ENCODE measurements at regions of chr15 and their contacts with region 1.

Region 1: DNA sequence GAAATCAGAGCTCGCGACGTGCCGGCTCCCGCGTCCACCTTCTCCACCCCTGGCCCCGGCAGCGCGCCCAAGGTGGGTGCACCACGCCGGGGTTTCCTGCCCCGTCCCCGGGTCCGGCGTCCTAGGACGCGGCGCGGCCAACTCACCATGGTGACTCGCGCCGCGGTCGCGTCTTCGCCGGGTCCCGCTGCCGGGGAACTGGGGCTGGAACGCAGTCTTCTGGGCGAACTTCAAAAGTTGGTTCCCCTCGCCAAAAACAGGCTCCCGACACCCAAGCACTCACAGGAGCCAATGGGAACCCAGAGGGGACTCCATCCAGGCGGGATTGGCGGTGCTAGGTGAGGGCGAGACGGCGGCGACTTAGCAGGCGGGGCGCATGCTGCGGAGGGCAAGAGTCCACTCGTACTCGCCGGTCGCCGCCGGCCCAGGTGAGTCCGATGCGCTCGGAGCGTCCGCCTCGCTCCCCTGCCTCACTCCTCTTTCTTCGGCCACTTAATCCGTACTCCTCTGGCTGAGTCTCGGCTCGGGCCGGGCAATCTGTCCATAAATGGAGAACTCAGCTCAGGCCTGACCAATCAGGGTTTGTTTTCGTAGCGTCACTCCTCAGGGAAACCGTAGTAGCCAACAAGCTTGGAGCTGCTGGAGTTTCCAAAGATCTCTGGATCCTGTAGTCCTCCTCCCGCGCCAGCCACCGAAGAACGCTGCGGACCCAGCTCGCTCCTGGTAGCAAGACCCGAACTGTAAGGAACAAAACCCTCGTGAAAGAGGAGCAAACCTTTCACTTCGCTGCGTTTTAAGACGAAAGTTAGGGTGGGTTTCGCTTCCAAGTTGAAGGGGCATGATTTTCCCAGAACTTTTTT is at the start of gene MYO1E:
- DNase-seq: peak; percentile 94
- H3K4me3 ChIP-seq: peak within 1 kb of the TSS; percentile 73 to 93 (median 82)
- H3K27ac ChIP-seq: peak within 1 kb of the TSS; percentile 98 to 100 (median 99)
- H3K4me1 ChIP-seq: peaks cover 6 to 8% of the 10 kb centered on the region in 2 donors
- H3K27me3 ChIP-seq: no peaks in the 10 kb centered on the region
- CTCF ChIP-seq: no peak
- POLR2A ChIP-seq: peak; percentile 48 to 99
- total RNA-seq, gene MYO1E: 19.5 to 56.6 (median 34.6) TPM

Region 2: DNA sequence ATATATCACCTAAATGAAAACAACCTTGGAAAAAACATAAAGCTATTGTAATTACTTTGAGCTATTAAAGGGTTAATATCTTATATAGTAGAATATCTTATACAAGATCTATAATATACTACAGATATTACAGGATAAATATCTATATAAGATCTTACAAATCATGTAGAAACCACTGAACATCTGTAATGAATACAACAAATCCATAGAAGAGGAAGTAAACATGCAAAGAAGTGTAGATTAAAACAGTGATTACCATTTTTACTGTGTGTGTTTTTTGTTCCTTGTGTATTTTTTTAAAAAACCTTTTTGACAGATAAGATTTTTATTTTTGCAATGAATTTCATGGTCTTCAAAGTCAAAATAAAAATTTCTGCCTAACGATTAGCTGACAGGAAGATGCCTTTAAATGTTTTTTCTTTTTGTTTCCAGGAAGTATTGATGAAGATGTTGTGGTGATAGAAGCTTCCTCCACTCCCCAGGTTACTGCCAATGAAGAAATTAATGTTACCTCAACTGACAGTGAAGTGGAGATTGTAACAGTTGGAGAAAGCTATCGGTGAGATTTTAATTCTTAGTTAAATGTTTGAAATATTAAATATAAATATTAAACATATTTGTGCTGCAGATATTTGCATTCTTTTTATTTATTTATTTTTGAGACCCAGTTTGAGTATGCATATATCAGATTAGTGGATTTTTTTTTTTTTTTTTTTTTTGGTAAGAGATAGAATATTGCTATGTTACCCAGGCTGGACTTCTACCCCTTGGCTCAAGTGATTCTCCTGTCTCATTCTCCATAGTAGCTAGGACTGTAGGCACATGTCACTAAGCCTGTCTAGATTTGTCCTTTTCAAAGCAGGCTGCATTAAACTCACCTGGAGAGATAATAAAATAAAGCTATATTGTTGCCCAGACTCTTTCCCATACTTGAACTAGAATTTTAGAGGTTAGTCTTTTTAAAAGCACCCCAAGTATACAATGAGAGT is 320.4 kb before region 1 on chr15:
- intact Hi-C with region 1: no loop called
- DNase-seq: no peak
- H3K4me3 ChIP-seq: no peak overlapping the region
- H3K27ac ChIP-seq: no peak overlapping the region
- H3K4me1 ChIP-seq: no peaks in the 10 kb centered on the region
- H3K27me3 ChIP-seq: no peaks in the 10 kb centered on the region
- CTCF ChIP-seq: no peak
- POLR2A ChIP-seq: no peak

Region 3: DNA sequence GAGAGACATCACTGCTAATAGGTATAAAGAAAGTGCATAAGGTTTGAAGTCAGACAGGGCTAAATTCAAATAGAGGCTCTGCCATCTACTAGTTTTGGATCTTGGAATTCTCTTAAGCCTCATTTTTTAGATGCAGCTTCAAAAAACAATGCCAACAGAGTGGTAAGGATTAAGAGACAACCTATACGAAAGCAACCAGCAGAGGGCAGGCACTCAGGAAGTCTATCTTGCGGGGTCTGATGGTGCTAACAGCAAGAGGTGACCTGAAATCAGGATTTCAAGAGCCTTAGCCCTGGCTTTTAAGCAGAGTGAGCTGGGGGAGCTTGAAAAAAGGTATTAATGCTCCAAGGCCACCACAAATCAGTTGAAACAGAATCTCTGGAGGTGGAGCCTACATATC is 125.2 kb before region 1 on chr15:
- intact Hi-C with region 1: loop called (anchors 10 kb)
- DNase-seq: peak; percentile 76
- H3K4me3 ChIP-seq: no peak overlapping the region
- H3K27ac ChIP-seq: no peak overlapping the region
- H3K4me1 ChIP-seq: no peaks in the 10 kb centered on the region
- H3K27me3 ChIP-seq: no peaks in the 10 kb centered on the region
- CTCF ChIP-seq: peak; percentile 19 to 71 (median 62)
- POLR2A ChIP-seq: no peak

Region 4: GRCh38 chr15:59313641-59314332 is 58.8 kb before region 1 on chr15:
- intact Hi-C with region 1: loop called (anchors 10 kb)
- DNase-seq: peak; percentile 95 to 96
- H3K4me3 ChIP-seq: no peak overlapping the region
- H3K27ac ChIP-seq: peak overlapping the region; percentile 42 to 73 (median 68)
- H3K4me1 ChIP-seq: peaks cover 35 to 44% of the 10 kb centered on the region in 2 donors
- H3K27me3 ChIP-seq: no peaks in the 10 kb centered on the region
- CTCF ChIP-seq: no peak
- POLR2A ChIP-seq: no peak

Measured in thyroid gland (tissue), 4 donors.